Left cardiac atrium (tissue), 4 donors: ENCODE measurements at regions of chr1 and their contacts with region 1.

Region 1: DNA sequence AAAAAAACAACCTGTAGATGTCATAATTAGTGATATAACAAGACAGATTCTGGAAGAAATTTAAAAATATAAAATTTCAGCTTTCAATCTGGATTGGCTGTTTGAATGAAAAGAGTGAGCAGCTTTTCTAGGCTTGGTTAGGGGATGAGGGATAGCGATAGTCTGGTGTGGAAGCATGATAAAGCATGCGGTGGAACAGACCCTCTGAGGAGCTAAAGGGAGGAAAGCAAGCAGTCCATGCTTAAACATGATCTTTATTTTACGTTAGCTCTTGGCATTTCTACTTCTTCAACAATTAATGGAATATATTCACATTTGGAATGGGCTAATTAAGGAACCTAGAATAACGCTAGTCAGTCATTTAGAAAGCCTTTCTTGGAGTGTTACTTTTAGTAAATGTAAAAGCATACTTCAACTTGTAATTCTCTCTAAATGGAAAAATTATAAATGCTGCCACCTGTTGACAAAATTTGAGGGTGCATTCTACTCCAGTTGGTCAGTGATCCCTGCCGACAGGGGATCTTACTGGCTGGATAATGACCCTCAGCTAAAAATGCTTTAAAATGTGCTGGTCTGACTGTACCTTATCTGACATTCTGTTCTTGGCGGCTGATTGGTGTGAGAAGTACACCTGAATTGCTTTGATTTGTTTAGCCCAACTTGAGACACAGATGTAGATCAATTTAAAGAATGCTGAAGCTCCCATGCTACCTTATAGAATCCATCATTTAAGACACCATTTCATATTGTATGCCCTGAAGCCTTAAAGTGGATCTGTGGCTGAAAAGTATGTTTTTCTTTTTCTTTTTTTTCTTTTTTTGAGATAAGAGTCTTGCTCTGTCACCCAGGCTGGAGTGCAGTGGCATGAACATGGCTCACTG is 61.2 kb downstream of the AK4 start:
- DNase-seq: no peak
- ATAC-seq: peak; percentile 68 to 71

Region 2: GRCh38 chr1:65059930-65060538 is 149.2 kb before region 1 on chr1:
- intact Hi-C with region 1: loop called in 1 of 2 experiments (anchors 2 kb)
- DNase-seq: no peak
- ATAC-seq: peak; percentile 29 to 60

Region 3: DNA sequence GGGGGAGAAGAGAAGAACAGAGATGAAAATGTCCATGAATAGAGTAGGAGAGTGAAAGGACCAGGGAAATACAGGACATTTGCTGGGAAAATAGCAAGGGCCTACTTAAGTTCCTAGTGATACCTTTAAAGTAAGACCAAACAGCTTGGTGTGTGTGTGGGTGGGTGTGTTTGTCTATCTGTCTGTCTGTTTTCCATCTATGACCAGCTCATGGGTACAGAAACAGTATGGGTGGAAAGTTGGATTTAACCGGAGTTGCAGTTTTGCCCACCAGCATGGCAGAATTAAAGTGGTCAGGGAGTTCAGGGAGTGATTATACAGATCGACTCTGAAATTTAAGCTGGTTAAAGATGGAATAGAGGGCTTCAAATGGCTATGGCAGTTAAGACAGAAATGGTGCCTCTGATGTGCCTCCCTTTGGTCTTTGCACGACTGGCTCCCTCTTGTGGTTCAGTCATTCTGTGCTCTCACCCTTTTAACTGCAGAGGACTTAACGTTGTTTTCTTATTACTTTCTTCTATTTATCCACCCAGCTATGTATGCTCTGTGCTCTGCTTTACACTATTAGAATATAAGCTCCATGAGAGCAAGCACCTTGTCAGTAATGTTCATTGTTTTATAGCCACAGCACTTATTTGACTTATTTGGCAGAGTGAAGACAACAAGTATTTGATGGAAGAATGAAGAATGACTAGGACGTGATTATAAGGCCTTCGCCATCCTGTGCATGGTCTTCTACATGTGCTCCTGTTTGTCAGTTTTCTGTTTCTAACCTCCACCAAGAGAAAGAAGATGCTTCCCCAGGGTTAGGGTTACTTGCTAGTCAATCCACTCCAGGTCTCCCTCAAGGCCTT is 133.9 kb before region 1 on chr1:
- intact Hi-C with region 1: loop called in 1 of 2 experiments (anchors 10 kb)
- DNase-seq: peak; percentile 50
- ATAC-seq: peak; percentile 71 to 85

Region 4: GRCh38 chr1:65148548-65149350 is 60.5 kb before region 1 on chr1:
- intact Hi-C with region 1: loop called in 1 of 2 experiments (anchors 10 kb)
- DNase-seq: peak; percentile 51
- ATAC-seq: peak; percentile 68 to 83

Region 5: GRCh38 chr1:65265651-65266351 is 56.6 kb after region 1 on chr1:
- intact Hi-C with region 1: no loop called
- DNase-seq: peak; percentile 55
- ATAC-seq: peak; percentile 90 to 92